ENCODE measurements at regions of chr1 and their contacts with region 1.

Region 1: DNA sequence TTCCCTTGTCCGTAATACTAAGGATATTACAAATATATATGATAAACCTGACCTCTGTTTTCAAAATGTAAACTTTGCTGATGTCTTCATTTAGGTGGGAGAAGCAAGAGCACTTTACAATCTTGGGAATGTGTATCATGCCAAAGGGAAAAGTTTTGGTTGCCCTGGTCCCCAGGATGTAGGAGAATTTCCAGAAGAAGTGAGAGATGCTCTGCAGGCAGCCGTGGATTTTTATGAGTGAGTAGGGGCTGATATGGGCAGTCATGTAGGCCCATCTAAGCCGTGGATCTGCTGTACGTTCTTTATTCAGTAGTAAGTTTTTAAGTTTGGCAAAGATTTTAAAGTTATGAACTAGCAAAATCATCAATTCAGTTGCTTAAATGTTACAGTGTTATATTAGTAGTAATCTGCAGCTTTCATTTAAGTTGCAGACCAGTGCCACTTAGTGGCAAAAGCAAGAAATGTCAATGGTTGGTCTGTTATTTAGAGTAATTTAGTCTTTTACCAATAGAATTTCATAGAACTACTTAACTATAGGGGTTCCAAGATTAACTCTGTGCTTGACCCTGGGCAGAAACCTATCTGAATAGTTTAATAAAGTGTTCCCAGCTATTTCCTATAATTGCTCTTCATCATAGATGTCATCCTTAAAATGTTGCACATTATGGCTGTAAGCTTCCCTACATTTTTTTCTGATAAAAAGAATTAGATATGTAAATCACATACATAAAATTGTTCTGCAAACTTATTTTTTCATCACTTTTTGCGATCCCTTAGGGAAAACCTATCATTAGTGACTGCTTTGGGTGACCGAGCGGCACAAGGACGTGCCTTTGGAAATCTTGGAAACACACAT is 21.3 kb downstream of the GPSM2 start:
- DNase-seq: no peak
- H3K4me3 ChIP-seq: no peak overlapping the region
- H3K27ac ChIP-seq: peak overlapping the region in 3 of 4 donors; percentile 76 to 81 (median 79)
- H3K4me1 ChIP-seq: peaks cover 0 to 30% (median 22%) of the 10 kb centered on the region in 4 donors
- H3K27me3 ChIP-seq: no peaks in the 10 kb centered on the region
- CTCF ChIP-seq: peak; percentile 50 to 69 (median 66)
- EP300 ChIP-seq: no peak
- POLR2A ChIP-seq: no peak

Region 2: GRCh38 chr1:108691942-108692723 is 206.0 kb before region 1 on chr1 and contains the start of gene PRPF38B:
- intact Hi-C with region 1: loop called (anchors 10 kb)
- DNase-seq: peak; percentile 97
- H3K4me3 ChIP-seq: peak within 1 kb of the TSS; percentile 84 to 88 (median 86)
- H3K27ac ChIP-seq: peak within 1 kb of the TSS; percentile 96 to 98 (median 97)
- H3K4me1 ChIP-seq: peaks cover 0 to 35% (median 33%) of the 10 kb centered on the region in 4 donors
- H3K27me3 ChIP-seq: no peaks in the 10 kb centered on the region
- CTCF ChIP-seq: no peak
- EP300 ChIP-seq: no peak
- POLR2A ChIP-seq: peak; percentile 91 to 94
- total RNA-seq, gene PRPF38B: 24.7 to 28.0 (median 26.1) TPM

Region 3: DNA sequence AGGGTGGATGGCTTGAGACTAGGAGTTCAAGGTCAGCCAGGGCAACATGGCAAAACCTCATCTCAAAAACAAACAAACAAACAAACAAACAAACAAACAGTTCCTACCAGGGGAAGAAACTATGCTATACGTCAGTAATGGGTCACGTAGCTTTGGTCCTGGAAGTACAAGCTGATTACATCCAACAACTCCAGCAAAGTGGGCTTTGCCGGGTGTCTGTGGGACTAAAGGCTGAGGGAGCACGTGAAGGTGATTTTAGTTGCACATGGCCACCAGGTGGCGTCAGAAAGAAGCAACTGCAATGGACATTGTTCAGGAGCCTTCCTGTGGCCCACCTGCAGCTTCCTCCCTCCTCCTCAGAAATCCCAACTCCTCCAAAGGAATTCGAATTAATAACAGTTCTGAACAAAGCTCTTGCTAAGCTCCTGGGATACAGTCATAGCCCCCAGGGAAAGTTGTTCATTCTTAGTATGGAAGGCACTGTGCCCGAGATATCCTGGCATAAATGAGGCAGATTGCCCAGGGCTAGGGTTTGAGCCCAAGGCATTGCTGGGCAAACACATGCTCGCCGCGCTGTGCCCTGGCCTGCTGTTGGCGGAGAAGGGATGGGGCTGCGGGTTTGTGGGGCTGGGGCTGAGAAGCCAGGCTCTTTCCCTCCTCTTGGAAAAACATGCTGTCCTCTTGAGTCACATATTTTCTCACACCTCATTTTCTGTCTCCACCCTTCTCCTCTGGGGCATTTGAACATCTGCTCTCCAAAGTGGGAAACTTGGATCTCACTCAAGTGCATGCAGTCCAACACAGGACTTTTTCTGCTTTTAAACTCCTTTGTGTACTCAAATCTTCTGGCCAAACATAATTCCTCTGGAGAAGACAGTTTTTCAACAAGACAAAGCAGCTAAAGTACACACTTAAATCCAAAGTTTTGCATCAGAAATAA is 69.8 kb before region 1 on chr1:
- intact Hi-C with region 1: loop called (anchors 1 kb)
- DNase-seq: peak; percentile 93
- H3K4me3 ChIP-seq: no peak overlapping the region
- H3K27ac ChIP-seq: peak overlapping the region; percentile 78 to 89 (median 84)
- H3K4me1 ChIP-seq: peaks cover 0 to 46% (median 40%) of the 10 kb centered on the region in 4 donors
- H3K27me3 ChIP-seq: no peaks in the 10 kb centered on the region
- CTCF ChIP-seq: peak; percentile 62 to 86 (median 76)
- EP300 ChIP-seq: no peak
- POLR2A ChIP-seq: no peak

Region 4: DNA sequence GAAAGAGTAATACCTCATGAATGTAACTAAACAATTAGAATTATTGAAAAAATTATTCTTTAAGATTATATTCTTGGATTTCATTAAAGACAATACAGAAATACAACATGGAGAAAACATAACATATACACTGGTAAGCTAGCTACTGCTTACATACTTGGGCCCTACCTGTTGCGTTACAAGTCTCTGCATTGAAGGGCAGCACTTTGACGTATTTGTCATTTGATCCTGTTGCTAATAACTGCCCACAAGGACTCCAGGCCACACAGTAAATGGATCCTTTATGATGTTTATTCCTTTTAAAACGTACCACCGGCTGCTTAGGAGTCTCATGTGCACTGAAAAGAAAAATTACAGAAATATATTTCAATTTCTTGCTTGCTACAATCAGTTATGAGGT is 85.0 kb after region 1 on chr1:
- intact Hi-C with region 1: no loop called
- DNase-seq: no peak
- H3K4me3 ChIP-seq: no peak overlapping the region
- H3K27ac ChIP-seq: no peak overlapping the region
- H3K4me1 ChIP-seq: no peaks in the 10 kb centered on the region
- H3K27me3 ChIP-seq: no peaks in the 10 kb centered on the region
- CTCF ChIP-seq: no peak
- EP300 ChIP-seq: no peak
- POLR2A ChIP-seq: no peak

Region 5: DNA sequence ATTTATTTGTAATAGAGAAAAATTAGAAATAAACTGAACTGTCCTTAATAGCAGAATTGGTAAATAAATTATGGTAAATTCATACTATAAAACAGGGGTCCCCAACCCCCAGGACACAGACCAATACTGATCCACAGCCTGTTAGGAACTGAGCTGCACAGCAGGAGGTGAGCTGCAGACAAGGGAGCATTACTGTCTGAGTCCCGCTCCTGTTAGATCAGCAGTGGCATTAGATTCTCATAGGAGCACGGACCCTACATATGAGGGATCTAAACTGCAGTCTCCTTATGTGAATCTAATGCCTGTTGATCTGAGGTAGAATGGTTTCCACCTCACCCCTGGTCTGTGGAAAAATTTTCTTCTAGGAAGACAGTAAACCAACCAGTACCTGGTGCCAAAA is 136.3 kb after region 1 on chr1:
- intact Hi-C with region 1: no loop called
- DNase-seq: no peak
- H3K4me3 ChIP-seq: no peak overlapping the region
- H3K27ac ChIP-seq: no peak overlapping the region
- H3K4me1 ChIP-seq: peaks cover 0 to 7% (median under 1%) of the 10 kb centered on the region in 4 donors
- H3K27me3 ChIP-seq: no peaks in the 10 kb centered on the region
- CTCF ChIP-seq: no peak
- EP300 ChIP-seq: no peak
- POLR2A ChIP-seq: no peak

Measured in sigmoid colon (tissue), 7 donors.